Heart right ventricle (tissue), 16 donors: ENCODE measurements at regions of chr12 and their contacts with region 1.

Region 1: DNA sequence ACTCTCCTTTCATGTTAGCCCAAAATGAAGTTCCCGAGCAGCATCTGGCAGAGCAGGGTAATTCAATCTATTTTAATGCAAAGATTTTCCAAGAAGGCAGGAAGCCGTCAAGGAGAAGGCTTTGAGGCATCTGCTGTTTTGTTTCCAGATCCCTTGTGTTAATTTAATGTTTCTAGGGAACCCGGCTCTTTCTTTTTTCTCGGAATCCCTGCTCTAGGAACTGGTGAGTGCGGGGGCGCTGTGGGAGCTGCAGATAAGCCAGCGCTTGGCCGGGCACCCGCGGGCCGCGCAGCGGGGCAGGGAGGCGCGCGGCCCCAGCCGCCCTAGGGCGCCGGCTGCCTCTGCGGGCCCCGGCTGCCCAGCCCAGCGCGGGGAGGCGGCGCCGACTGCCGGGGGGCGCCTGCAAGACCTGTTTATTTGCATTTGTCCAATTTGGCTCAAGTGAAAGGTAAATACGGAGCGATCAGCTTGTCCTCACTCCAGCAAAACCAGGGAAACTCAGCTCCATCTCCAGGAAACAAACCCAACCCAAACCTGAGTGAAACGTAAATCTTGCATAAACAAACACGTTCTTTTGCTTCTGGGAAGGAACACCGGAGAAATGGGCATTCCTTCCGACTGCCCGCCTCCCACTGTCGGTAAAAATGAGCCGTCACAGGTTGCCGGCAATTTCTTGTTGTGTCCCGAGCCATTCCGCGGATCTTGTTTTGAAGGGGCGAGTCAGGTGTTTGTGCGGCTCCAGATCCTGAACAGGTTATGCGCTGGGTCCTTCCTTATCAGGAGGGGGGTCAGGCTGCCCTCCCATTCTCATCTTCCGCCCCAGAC is 65.1 kb downstream of the CRADD start:
- DNase-seq: peak; percentile 75 to 80
- ATAC-seq: peak; percentile 88 to 96 (median 90)
- H3K4me3 ChIP-seq: peak overlapping the region; percentile 16 to 68 (median 64)
- H3K27ac ChIP-seq: peak overlapping the region; percentile 86 to 95 (median 91)
- H3K4me1 ChIP-seq: peaks cover 5 to 88% (median 74%) of the 10 kb centered on the region in 9 donors
- H3K27me3 ChIP-seq: no peaks in the 10 kb centered on the region
- CTCF ChIP-seq: peak in 8 of 9 donors; percentile 11 to 57 (median 44)

Region 2: DNA sequence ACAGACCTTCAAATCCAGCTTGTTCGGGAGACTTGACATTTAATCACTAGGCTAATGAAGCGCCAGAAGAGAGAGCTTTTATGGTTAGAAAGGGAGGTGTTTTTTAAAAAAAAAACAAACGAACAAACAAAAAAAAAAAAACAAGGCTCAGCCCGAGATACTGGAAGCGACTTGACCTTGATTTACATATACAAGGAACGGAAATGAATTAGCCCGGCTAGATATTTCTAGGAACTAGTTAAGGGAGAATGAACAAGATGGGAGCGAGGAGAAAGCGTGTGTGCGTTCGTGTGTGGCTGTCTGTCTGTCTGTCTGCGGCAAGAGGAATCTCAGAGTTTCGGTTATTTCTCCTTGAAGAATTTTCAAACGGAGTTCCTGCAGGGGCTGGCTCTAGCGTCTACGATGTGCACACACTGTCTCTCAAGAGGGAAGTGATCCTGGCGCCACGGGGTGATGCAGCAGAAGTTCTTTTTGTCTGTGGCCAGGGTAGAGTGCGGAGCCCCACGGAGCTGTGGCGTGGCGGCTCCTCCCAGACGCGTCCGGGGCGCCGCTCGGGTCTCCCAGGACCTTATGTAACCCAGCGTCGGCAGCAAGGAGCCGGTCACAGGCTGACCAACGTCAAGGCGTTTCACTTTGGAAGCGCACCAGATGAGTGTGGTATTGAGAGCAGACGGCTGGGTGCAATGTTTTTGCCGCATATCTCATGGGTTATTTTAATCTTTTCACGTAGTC is 151.0 kb before region 1 on chr12:
- intact Hi-C with region 1: loop called in 7 of 10 experiments (anchors 2 to 5 kb)
- DNase-seq: peak; percentile 81 to 86
- ATAC-seq: peak; percentile 93 to 98 (median 94)
- H3K4me3 ChIP-seq: peak overlapping the region; percentile 22 to 67 (median 60)
- H3K27ac ChIP-seq: peak overlapping the region; percentile 71 to 95 (median 88)
- H3K4me1 ChIP-seq: peaks cover 0 to 45% (median 36%) of the 10 kb centered on the region in 9 donors
- H3K27me3 ChIP-seq: peaks cover 0 to 35% (median 0%) of the 10 kb centered on the region in 7 donors
- CTCF ChIP-seq: no peak

Region 3: DNA sequence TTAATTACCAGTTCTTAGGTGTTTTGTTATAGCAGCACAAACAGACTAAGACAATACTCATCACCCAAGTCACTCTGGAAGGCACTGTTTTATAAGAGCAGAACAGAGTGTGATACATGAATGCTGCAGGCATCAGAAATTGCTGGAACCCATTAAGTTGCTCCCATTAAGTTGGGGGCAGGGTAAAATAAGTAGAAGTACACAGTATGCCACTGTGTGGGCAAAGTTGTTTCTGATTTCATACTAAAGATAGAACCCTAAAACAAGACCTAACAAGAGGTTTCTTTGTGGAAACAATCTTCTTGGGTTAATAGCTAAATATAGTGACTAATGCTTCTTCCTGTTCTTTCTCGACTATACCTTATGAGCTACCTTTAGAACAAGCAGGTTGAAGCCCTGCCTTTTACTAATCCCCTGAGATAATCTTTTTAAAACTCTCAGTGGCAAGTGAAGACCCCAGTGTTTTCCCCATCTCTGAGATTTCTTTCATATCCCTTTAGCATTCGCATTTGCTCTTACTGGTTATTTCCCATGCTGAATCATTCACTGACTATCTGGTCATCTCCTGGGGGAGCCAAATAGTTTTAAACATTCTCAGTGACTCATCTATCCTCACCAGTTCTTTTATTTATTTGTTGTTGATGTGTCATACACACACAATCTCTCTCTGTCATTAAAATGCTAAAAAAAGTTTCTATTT is 117.6 kb before region 1 on chr12:
- intact Hi-C with region 1: no loop called
- DNase-seq: no peak
- ATAC-seq: peak in 2 of 8 donors; percentile 39 to 77
- H3K4me3 ChIP-seq: no peak overlapping the region
- H3K27ac ChIP-seq: peak overlapping the region in 1 of 10 donors; percentile 62
- H3K4me1 ChIP-seq: peaks cover 0 to 7% (median 0%) of the 10 kb centered on the region in 9 donors
- H3K27me3 ChIP-seq: no peaks in the 10 kb centered on the region
- CTCF ChIP-seq: no peak

Region 4: GRCh38 chr12:93699271-93700145 is 42.8 kb before region 1 on chr12:
- intact Hi-C with region 1: no loop called
- DNase-seq: no peak
- ATAC-seq: peak in 3 of 8 donors; percentile 27 to 59 (median 34)
- H3K4me3 ChIP-seq: no peak overlapping the region
- H3K27ac ChIP-seq: peak overlapping the region in 8 of 10 donors; percentile 3 to 67 (median 46)
- H3K4me1 ChIP-seq: peaks cover 4 to 68% (median 58%) of the 10 kb centered on the region in 9 donors
- H3K27me3 ChIP-seq: no peaks in the 10 kb centered on the region
- CTCF ChIP-seq: no peak

Region 5: GRCh38 chr12:94039914-94040313 is 297.6 kb after region 1 on chr12:
- intact Hi-C with region 1: no loop called
- DNase-seq: no peak
- ATAC-seq: peak in 7 of 8 donors; percentile 23 to 78 (median 59)
- H3K4me3 ChIP-seq: no peak overlapping the region
- H3K27ac ChIP-seq: peak overlapping the region in 2 of 10 donors; percentile 20 to 57
- H3K4me1 ChIP-seq: peaks cover 0 to 14% (median 0%) of the 10 kb centered on the region in 9 donors
- H3K27me3 ChIP-seq: no peaks in the 10 kb centered on the region
- CTCF ChIP-seq: no peak